Right cardiac atrium (tissue), 5 donors: ENCODE measurements at regions of chr1 and their contacts with region 1.

Region 1: GRCh38 chr1:244599937-244600350 is 53.0 kb upstream of the DESI2 start:
- DNase-seq: no peak
- ATAC-seq: peak; percentile 41 to 70
- H3K4me3 ChIP-seq: no peak overlapping the region
- H3K27ac ChIP-seq: no peak overlapping the region
- H3K4me1 ChIP-seq: no peaks in the 10 kb centered on the region
- H3K27me3 ChIP-seq: no peaks in the 10 kb centered on the region

Region 2: DNA sequence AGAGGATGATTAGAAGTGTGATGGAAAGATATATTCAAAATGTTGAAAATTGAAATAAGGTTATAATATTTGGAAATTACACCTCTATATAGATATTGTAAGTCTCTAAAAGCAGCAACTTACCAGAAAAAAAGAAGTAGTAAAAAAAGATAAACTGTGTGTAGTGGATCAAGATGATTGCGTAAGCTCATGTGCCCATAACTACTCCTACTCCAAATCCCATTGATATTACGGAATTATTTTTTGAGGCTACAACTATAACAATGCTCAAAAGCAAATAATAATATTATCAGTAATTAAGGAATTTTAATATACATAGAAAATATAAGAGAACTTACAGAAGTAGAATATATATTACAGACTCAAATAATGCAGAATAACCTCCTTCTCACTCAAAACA is 105.3 kb before region 1 on chr1:
- intact Hi-C with region 1: no loop called
- DNase-seq: no peak
- ATAC-seq: no peak
- H3K4me3 ChIP-seq: no peak overlapping the region
- H3K27ac ChIP-seq: no peak overlapping the region
- H3K4me1 ChIP-seq: no peaks in the 10 kb centered on the region
- H3K27me3 ChIP-seq: no peaks in the 10 kb centered on the region

Region 3: DNA sequence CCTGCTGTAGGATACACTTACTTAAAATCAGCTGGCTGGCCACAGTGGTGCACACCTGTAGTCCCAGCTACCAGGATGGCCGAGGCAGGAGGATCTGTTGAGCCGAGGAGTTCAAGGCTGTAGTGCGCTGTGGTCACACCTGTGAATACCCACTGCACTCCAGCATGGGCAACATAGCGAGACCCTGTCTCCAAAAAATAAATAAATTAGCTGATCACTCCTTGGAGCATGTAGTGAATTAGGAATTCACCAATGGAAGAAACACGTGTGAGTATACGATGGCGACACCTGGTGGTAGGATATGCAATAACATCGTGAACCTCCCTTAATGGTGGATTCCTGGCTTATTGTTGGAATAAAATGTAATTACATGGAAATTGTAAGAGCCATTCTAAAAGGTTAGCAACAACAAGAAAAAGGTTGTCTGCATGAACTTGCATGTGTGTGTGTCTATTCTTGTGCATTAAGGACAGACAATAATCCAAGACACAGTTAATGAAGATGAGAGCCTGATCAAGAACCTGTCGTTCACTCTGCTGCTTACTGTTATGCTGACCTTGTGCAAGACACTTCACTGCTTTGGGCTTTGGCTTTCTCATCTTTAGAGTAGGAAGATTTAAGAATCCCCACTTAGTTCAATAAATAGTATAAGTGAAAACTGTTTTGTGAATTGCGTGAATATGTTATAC is 196.9 kb after region 1 on chr1:
- intact Hi-C with region 1: loop called (anchors 2 to 5 kb)
- DNase-seq: peak in 1 of 3 donors; percentile 63
- ATAC-seq: peak; percentile 65 to 67
- H3K4me3 ChIP-seq: no peak overlapping the region
- H3K27ac ChIP-seq: no peak overlapping the region
- H3K4me1 ChIP-seq: no peaks in the 10 kb centered on the region
- H3K27me3 ChIP-seq: no peaks in the 10 kb centered on the region

Region 4: GRCh38 chr1:245051349-245052221 is 451.6 kb after region 1 on chr1:
- intact Hi-C with region 1: loop called in 2 of 4 experiments (anchors 10 kb)
- DNase-seq: peak; percentile 56 to 85 (median 77)
- ATAC-seq: peak; percentile 89
- H3K4me3 ChIP-seq: peak overlapping the region; percentile 27
- H3K27ac ChIP-seq: no peak overlapping the region
- H3K4me1 ChIP-seq: peaks cover 3% of the 10 kb centered on the region
- H3K27me3 ChIP-seq: no peaks in the 10 kb centered on the region